Activated CD8-positive, alpha-beta memory T cell treated with anti-CD3 and anti-CD28 coated beads, Interleukin-2, amount 10 ng/mL, durations not matched to agents 7 days and 5 days (primary cell): ENCODE measurements at regions of chr16 and their contacts with region 1.

Region 1: GRCh38 chr16:27628241-27628942 is 78.4 kb downstream of the KATNIP start:
- DNase-seq: no peak
- ATAC-seq: no peak
- H3K4me3 Mint-ChIP-seq: no peak overlapping the region
- H3K27ac Mint-ChIP-seq: no peak overlapping the region
- H3K4me1 Mint-ChIP-seq: no peaks in the 10 kb centered on the region
- H3K27me3 Mint-ChIP-seq: no peaks in the 10 kb centered on the region

Region 2: GRCh38 chr16:27639561-27640276 is 11.3 kb after region 1 on chr16:
- CTCF ChIA-PET with region 1: interaction called, 13 read pairs
- DNase-seq: peak; percentile 45
- ATAC-seq: no peak
- H3K4me3 Mint-ChIP-seq: no peak overlapping the region
- H3K27ac Mint-ChIP-seq: no peak overlapping the region
- H3K4me1 Mint-ChIP-seq: peaks cover 5% of the 10 kb centered on the region
- H3K27me3 Mint-ChIP-seq: no peaks in the 10 kb centered on the region

Region 3: DNA sequence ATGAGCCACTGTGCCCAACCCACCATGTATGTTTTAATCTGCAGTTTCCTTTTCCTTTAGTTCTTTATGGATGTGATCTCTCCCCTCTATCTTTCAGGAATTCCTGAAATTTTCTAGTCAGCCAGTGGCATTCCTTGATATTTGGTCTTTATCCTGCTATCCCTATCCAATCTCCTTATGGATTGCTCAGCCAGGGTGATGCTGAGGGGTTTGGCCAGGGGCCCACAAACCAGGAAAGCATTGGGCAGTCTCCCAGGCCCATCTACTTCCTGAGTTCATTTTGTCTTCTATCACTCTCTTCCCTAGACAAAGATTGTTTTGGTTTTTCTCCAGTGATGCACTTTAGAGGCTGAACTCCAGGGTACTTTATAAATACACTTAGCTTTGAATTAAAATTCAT is 37.5 kb after region 1 on chr16:
- CTCF ChIA-PET with region 1: no interaction called
- DNase-seq: no peak
- ATAC-seq: no peak
- H3K4me3 Mint-ChIP-seq: no peak overlapping the region
- H3K27ac Mint-ChIP-seq: no peak overlapping the region
- H3K4me1 Mint-ChIP-seq: no peaks in the 10 kb centered on the region
- H3K27me3 Mint-ChIP-seq: no peaks in the 10 kb centered on the region